ENCODE measurements at regions of chr15 and their contacts with region 1.

Region 1: GRCh38 chr15:78422571-78423340 is 15.3 kb upstream of the IREB2 start:
- H3K4me3 ChIP-seq: no peak overlapping the region
- H3K27ac ChIP-seq: no peak overlapping the region
- H3K4me1 ChIP-seq: no peaks in the 10 kb centered on the region
- CTCF ChIP-seq: peak; percentile 54; the same call in 1 of the 2 replicates

Region 2: DNA sequence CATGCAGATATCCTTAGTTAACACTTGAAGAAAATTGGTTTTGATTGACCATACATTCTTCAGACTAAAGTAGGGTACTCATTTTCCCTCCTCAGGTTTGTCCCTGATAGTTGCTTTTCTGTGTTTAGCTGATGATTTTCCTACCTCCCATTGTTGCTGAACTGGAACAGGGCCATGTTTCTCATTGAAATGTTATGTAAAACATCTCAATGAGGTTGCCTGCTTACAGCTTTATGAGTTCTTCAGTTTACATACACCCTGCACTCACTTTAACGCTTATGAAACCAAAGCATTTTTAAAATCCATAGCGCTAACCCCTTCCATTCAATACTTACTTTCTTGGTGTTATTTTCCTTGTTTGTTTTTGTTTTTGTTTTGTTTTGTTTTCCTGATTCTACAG is 940.2 kb before region 1 on chr15:
- CTCF ChIA-PET with region 1: no interaction called
- POLR2A ChIA-PET with region 1: no interaction called
- H3K4me3 ChIP-seq: no peak overlapping the region
- H3K27ac ChIP-seq: no peak overlapping the region
- H3K4me1 ChIP-seq: no peaks in the 10 kb centered on the region
- CTCF ChIP-seq: no peak

Region 3: DNA sequence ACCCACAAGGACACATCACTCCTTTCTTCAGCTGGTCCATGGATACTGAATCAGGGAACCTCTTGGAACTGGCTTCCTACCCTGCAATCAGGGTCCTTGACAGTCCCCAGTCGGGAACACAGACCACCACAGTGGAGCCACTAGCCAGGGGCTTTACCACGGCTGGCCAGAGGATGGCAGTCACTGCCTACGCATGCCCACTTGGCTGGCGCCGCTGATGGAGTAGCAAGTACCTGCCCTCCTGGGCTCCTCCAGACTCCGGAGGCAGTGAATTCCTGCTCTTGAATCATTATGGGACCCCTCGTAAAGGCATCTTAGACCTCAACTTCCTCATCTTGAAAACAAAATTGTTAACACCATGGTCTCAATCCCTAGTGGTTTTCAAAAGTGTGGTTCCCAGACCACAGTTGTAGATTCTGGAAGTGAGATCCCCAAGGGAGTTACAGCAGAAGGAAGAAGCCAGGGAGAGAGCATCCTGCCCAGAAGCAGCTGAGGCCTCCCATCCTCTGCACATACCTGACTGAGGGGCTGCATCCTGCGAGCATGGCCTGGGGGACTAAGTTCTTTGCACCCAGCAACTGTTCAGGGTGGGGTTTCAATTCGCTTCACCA is 114.2 kb before region 1 on chr15:
- CTCF ChIA-PET with region 1: interaction called, 176 read pairs
- POLR2A ChIA-PET with region 1: no interaction called
- H3K4me3 ChIP-seq: no peak overlapping the region
- H3K27ac ChIP-seq: no peak overlapping the region
- H3K4me1 ChIP-seq: no peaks in the 10 kb centered on the region
- CTCF ChIP-seq: peak; percentile 91

Region 4: GRCh38 chr15:78315686-78316282 is 107.0 kb before region 1 on chr15:
- CTCF ChIA-PET with region 1: interaction called, 176 read pairs
- POLR2A ChIA-PET with region 1: no interaction called
- H3K4me3 ChIP-seq: no peak overlapping the region
- H3K27ac ChIP-seq: no peak overlapping the region
- H3K4me1 ChIP-seq: no peaks in the 10 kb centered on the region
- CTCF ChIP-seq: peak; percentile 57

Region 5: GRCh38 chr15:78396976-78397375 is 25.8 kb before region 1 on chr15:
- CTCF ChIA-PET with region 1: interaction called, 29 read pairs
- POLR2A ChIA-PET with region 1: no interaction called
- H3K4me3 ChIP-seq: no peak overlapping the region
- H3K27ac ChIP-seq: no peak overlapping the region
- H3K4me1 ChIP-seq: no peaks in the 10 kb centered on the region
- CTCF ChIP-seq: no peak